Activated B cell treated with CpG ODN at 0.5 μM for 24 hours (primary cell): ENCODE measurements at regions of chr7 and their contacts with region 1.

Region 1: GRCh38 chr7:100195222-100195621 is 17.5 kb downstream of the STAG3 start:
- DNase-seq: no peak
- ATAC-seq: no peak
- H3K4me3 Mint-ChIP-seq: no peak overlapping the region
- H3K27ac Mint-ChIP-seq: peak overlapping the region; percentile 91
- H3K4me1 Mint-ChIP-seq: peaks cover 90% of the 10 kb centered on the region
- H3K27me3 Mint-ChIP-seq: no peaks in the 10 kb centered on the region
- CTCF ChIP-seq: no peak

Region 2: GRCh38 chr7:99642027-99642426 is 553.2 kb before region 1 on chr7:
- CTCF ChIA-PET with region 1: no interaction called
- POLR2A ChIA-PET with region 1: no interaction called
- intact Hi-C with region 1: no loop called
- DNase-seq: no peak
- ATAC-seq: no peak
- H3K4me3 Mint-ChIP-seq: no peak overlapping the region
- H3K27ac Mint-ChIP-seq: no peak overlapping the region
- H3K4me1 Mint-ChIP-seq: no peaks in the 10 kb centered on the region
- H3K27me3 Mint-ChIP-seq: no peaks in the 10 kb centered on the region
- CTCF ChIP-seq: no peak

Region 3: DNA sequence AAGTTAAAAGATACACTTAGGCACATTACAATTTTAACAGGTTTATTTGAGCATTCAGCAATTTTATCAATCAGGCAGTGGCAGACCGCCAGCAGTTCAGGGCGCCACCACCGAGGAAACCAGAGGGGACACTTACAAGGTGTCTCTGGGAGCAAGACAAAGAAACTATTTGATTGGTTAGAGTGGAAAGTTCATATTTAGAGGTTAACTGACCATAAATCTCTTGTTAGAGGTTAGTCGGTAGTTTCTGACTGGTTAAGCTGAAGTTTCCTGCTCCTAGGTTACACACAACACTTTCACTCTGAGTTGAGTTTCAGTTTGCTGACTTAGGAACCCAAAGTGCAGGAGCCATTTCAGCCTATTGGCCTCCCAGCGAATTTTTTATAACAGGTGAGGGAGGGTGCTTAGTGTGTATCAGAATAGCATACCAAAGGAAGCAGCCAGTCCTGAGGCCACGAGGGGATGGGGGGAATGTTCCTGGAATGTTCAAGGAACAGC is 13.7 kb after region 1 on chr7:
- CTCF ChIA-PET with region 1: interaction called, 30 read pairs
- POLR2A ChIA-PET with region 1: interaction called, 50 read pairs
- intact Hi-C with region 1: loop called (anchors 1 kb)
- DNase-seq: no peak
- ATAC-seq: peak; percentile 61
- H3K4me3 Mint-ChIP-seq: peak overlapping the region; percentile 64
- H3K27ac Mint-ChIP-seq: peak overlapping the region; percentile 82
- H3K4me1 Mint-ChIP-seq: peaks cover 67% of the 10 kb centered on the region
- H3K27me3 Mint-ChIP-seq: no peaks in the 10 kb centered on the region
- CTCF ChIP-seq: no peak

Region 4: GRCh38 chr7:100221231-100221718 is 26.1 kb after region 1 on chr7:
- CTCF ChIA-PET with region 1: interaction called, 33 read pairs
- POLR2A ChIA-PET with region 1: interaction called, 14 read pairs
- intact Hi-C with region 1: loop called (anchors 1 kb)
- DNase-seq: peak; percentile 48
- ATAC-seq: peak; percentile 40
- H3K4me3 Mint-ChIP-seq: peak overlapping the region; percentile 86
- H3K27ac Mint-ChIP-seq: peak overlapping the region; percentile 95
- H3K4me1 Mint-ChIP-seq: peaks cover 84% of the 10 kb centered on the region
- H3K27me3 Mint-ChIP-seq: no peaks in the 10 kb centered on the region
- CTCF ChIP-seq: no peak